ENCODE measurements at regions of chr2 and their contacts with region 1.

Region 1: GRCh38 chr2:69694894-69695849 is 46.8 kb upstream of the ANXA4 start:
- DNase-seq: peak in 1 of 9 donors; percentile 29
- ATAC-seq: no peak
- H3K4me3 ChIP-seq: peak overlapping the region; percentile 22
- H3K4me3 Mint-ChIP-seq: peak overlapping the region; percentile 20 to 89 (median 60)
- H3K27ac ChIP-seq: peak overlapping the region; percentile 64
- H3K27ac Mint-ChIP-seq: peak overlapping the region; percentile 43 to 99 (median 94)
- H3K4me1 ChIP-seq: peaks cover 46 to 87% of the 10 kb centered on the region in 2 donors
- H3K4me1 Mint-ChIP-seq: peaks cover 49 to 98% (median 96%) of the 10 kb centered on the region in 7 donors
- H3K27me3 ChIP-seq: no peaks in the 10 kb centered on the region
- H3K27me3 Mint-ChIP-seq: no peaks in the 10 kb centered on the region

Region 2: GRCh38 chr2:69565431-69565839 is 129.7 kb before region 1 on chr2:
- CTCF ChIA-PET with region 1: interaction called, 15 read pairs
- POLR2A ChIA-PET with region 1: interaction called, 5 read pairs
- intact Hi-C with region 1: no loop called
- DNase-seq: peak; percentile 39 to 75 (median 51)
- ATAC-seq: peak; percentile 88
- H3K4me3 ChIP-seq: no peak overlapping the region
- H3K4me3 Mint-ChIP-seq: peak overlapping the region in 9 of 10 donors; percentile 63 to 84 (median 75)
- H3K27ac ChIP-seq: no peak overlapping the region
- H3K27ac Mint-ChIP-seq: peak overlapping the region; percentile 36 to 94 (median 77)
- H3K4me1 ChIP-seq: peaks cover 35 to 74% of the 10 kb centered on the region in 2 donors
- H3K4me1 Mint-ChIP-seq: peaks cover 63 to 99% (median 96%) of the 10 kb centered on the region in 7 donors
- H3K27me3 ChIP-seq: no peaks in the 10 kb centered on the region
- H3K27me3 Mint-ChIP-seq: no peaks in the 10 kb centered on the region

Region 3: GRCh38 chr2:69616756-69617155 is 78.4 kb before region 1 on chr2:
- CTCF ChIA-PET with region 1: no interaction called
- POLR2A ChIA-PET with region 1: interaction called, 3 read pairs
- intact Hi-C with region 1: loop called in 1 of 2 experiments (anchors 2 kb)
- DNase-seq: peak in 1 of 9 donors; percentile 45
- ATAC-seq: no peak
- H3K4me3 ChIP-seq: no peak overlapping the region
- H3K4me3 Mint-ChIP-seq: peak overlapping the region in 6 of 10 donors; percentile 8 to 52 (median 34)
- H3K27ac ChIP-seq: no peak overlapping the region
- H3K27ac Mint-ChIP-seq: peak overlapping the region in 6 of 9 donors; percentile 22 to 90 (median 70)
- H3K4me1 ChIP-seq: peaks cover 63 to 68% of the 10 kb centered on the region in 2 donors
- H3K4me1 Mint-ChIP-seq: peaks cover 0 to 45% (median 33%) of the 10 kb centered on the region in 7 donors
- H3K27me3 ChIP-seq: no peaks in the 10 kb centered on the region
- H3K27me3 Mint-ChIP-seq: no peaks in the 10 kb centered on the region

Region 4: GRCh38 chr2:69652221-69652651 is 42.9 kb before region 1 on chr2:
- CTCF ChIA-PET with region 1: interaction called, 58 read pairs
- POLR2A ChIA-PET with region 1: interaction called, 334 read pairs
- intact Hi-C with region 1: no loop called
- DNase-seq: no peak
- ATAC-seq: no peak
- H3K4me3 ChIP-seq: no peak overlapping the region
- H3K4me3 Mint-ChIP-seq: peak overlapping the region in 9 of 10 donors; percentile 6 to 65 (median 43)
- H3K27ac ChIP-seq: no peak overlapping the region
- H3K27ac Mint-ChIP-seq: peak overlapping the region; percentile 25 to 88 (median 79)
- H3K4me1 ChIP-seq: peaks cover 27 to 35% of the 10 kb centered on the region in 2 donors
- H3K4me1 Mint-ChIP-seq: peaks cover 38 to 74% (median 55%) of the 10 kb centered on the region in 7 donors
- H3K27me3 ChIP-seq: no peaks in the 10 kb centered on the region
- H3K27me3 Mint-ChIP-seq: no peaks in the 10 kb centered on the region

Region 5: DNA sequence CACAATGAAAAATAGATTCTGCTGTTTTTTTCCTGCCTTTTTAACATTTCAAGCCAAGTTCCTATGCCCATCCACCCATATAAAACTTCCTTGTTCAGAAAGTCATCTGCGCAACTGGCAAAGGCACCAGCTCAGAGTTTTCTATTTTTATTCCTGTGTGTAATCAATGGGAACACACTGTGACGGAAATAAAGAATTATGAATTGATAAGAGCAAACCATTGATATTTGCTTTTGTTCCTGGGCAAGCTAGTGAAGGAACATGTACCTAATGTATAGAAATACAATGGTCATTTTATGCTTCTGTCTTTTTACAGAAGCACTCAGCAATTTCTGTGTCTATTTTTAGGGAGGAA is 20.9 kb before region 1 on chr2:
- CTCF ChIA-PET with region 1: interaction called, 4 read pairs
- POLR2A ChIA-PET with region 1: interaction called, 5 read pairs
- intact Hi-C with region 1: loop called in 1 of 2 experiments (anchors 2 kb)
- DNase-seq: no peak
- ATAC-seq: no peak
- H3K4me3 ChIP-seq: no peak overlapping the region
- H3K4me3 Mint-ChIP-seq: no peak overlapping the region
- H3K27ac ChIP-seq: no peak overlapping the region
- H3K27ac Mint-ChIP-seq: peak overlapping the region in 1 of 9 donors; percentile 68
- H3K4me1 ChIP-seq: no peaks in the 10 kb centered on the region
- H3K4me1 Mint-ChIP-seq: peaks cover 0 to 35% (median 24%) of the 10 kb centered on the region in 7 donors
- H3K27me3 ChIP-seq: no peaks in the 10 kb centered on the region
- H3K27me3 Mint-ChIP-seq: no peaks in the 10 kb centered on the region

Region 6: GRCh38 chr2:69683101-69683971 is 11.8 kb before region 1 on chr2:
- CTCF ChIA-PET with region 1: interaction called, 6 read pairs
- POLR2A ChIA-PET with region 1: interaction called, 19 read pairs
- intact Hi-C with region 1: loop called in 1 of 2 experiments (anchors 1 kb)
- DNase-seq: no peak
- ATAC-seq: no peak
- H3K4me3 ChIP-seq: no peak overlapping the region
- H3K4me3 Mint-ChIP-seq: peak overlapping the region; percentile 60 to 85 (median 76)
- H3K27ac ChIP-seq: peak overlapping the region; percentile 25
- H3K27ac Mint-ChIP-seq: peak overlapping the region; percentile 76 to 93 (median 89)
- H3K4me1 ChIP-seq: peaks cover 18 to 42% of the 10 kb centered on the region in 2 donors
- H3K4me1 Mint-ChIP-seq: peaks cover 32 to 89% (median 75%) of the 10 kb centered on the region in 7 donors
- H3K27me3 ChIP-seq: no peaks in the 10 kb centered on the region
- H3K27me3 Mint-ChIP-seq: no peaks in the 10 kb centered on the region

Region 7: GRCh38 chr2:69717861-69718273 is 22.7 kb after region 1 on chr2:
- CTCF ChIA-PET with region 1: interaction called, 37 read pairs
- POLR2A ChIA-PET with region 1: interaction called, 49 read pairs
- intact Hi-C with region 1: loop called in 1 of 2 experiments (anchors 1 kb)
- DNase-seq: no peak
- ATAC-seq: no peak
- H3K4me3 ChIP-seq: no peak overlapping the region
- H3K4me3 Mint-ChIP-seq: no peak overlapping the region
- H3K27ac ChIP-seq: no peak overlapping the region
- H3K27ac Mint-ChIP-seq: peak overlapping the region in 1 of 9 donors; percentile 42
- H3K4me1 ChIP-seq: peaks cover 4 to 5% of the 10 kb centered on the region in 2 donors
- H3K4me1 Mint-ChIP-seq: peaks cover 6 to 24% (median 17%) of the 10 kb centered on the region in 7 donors
- H3K27me3 ChIP-seq: no peaks in the 10 kb centered on the region
- H3K27me3 Mint-ChIP-seq: peaks cover 0 to 3% (median 0%) of the 10 kb centered on the region in 5 donors